Dendritic cell treated with granulocyte-macrophage colony-stimulating factor and Interleukin-4, amounts not matched to agents 40 ng/mL and 50 ng/mL, for 4 days (primary cell): ENCODE measurements at regions of chr10 and their contacts with region 1.

Region 1: DNA sequence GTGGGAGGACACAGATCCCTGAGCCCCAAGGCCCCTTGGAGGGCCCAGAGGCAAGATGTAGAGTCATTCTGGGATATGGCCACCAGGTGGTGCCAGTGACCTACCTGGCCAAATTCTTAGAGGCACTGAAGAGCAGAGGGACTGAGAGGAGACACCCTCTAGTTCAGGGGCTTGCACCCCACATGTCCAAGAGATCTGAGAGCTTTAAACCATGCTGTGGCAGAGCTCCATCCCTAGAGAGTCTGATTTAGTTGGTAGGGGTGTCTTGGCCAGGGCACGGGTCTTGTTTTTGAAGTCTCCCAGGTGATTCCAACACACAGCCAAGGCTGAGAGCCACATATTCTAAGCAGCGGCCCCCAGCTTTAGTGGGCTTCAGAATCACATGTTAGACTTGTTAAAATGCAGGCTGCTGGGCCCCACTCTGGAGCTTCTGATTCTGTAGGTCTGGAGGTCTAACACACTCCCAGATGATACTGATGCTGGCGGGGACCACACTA is 52.5 kb downstream of the PRF1 start:
- H3K4me3 Mint-ChIP-seq: no peak overlapping the region
- H3K27ac Mint-ChIP-seq: no peak overlapping the region
- H3K4me1 Mint-ChIP-seq: peaks cover 1% of the 10 kb centered on the region
- H3K27me3 Mint-ChIP-seq: no peaks in the 10 kb centered on the region

Region 2: DNA sequence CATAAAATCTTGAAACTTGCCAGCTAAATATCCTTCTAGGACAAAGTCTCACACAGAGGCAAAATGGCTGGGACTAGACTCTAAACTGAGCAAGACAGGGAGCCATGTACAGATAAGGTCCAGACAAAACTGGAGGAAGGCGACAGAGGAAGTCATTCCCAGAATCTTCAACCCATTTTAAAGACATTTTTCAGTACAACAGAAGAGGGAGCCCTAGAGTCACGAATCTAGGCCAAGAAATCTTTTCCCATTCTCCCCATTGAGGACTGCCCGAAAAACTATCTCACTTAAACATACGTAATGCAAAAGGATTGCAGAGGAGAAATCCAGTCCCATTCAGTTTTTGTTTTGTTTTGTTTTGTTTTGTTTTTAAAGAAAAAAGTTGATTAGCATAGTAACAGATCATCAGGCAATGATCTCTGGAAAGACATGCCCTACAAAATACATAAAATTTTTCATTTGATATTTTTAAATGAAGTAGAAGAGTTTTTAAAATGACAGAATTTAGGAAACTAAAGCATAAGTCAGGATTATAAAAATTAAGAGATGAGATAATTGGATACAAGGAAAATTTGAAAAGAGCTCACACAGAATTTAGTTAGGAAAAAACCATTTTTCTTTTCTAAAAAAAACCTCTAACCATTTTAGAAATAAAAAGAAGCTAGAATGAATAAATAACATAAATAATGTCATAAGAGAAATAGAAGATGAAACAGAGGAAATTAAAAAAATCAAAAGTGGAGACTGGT is 69.4 kb after region 1 on chr10:
- intact Hi-C with region 1: loop called (anchors 10 kb)
- H3K4me3 Mint-ChIP-seq: no peak overlapping the region
- H3K27ac Mint-ChIP-seq: no peak overlapping the region
- H3K4me1 Mint-ChIP-seq: peaks cover 20% of the 10 kb centered on the region
- H3K27me3 Mint-ChIP-seq: peaks cover 24% of the 10 kb centered on the region

Region 3: DNA sequence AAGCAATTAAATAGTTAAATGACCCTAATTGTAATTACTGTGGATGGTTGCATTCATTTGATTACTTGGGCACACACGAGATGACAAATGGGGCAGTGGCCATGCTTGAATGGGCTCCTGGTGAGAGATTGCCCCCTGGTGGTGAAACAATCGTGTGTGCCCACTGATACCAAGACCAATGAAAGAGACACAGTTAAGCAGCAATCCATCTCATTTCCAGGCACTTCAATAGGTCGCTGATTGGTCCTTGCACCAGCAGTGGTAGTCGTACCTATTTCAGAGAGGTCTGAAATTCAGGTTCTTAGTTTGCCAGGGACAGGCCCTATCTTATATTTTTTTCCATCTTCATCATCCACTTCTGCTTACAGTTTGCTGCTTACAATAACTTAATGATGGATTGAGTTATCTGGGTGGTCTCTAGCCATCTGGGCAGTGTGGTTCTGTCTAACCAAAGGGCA is 330.1 kb after region 1 on chr10:
- intact Hi-C with region 1: loop called (anchors 5 kb)
- H3K4me3 Mint-ChIP-seq: no peak overlapping the region
- H3K27ac Mint-ChIP-seq: peak overlapping the region; percentile 78
- H3K4me1 Mint-ChIP-seq: peaks cover 20% of the 10 kb centered on the region
- H3K27me3 Mint-ChIP-seq: no peaks in the 10 kb centered on the region

Region 4: GRCh38 chr10:71547876-71548846 is 998.2 kb after region 1 on chr10:
- intact Hi-C with region 1: no loop called
- H3K4me3 Mint-ChIP-seq: no peak overlapping the region
- H3K27ac Mint-ChIP-seq: no peak overlapping the region
- H3K4me1 Mint-ChIP-seq: peaks cover 11% of the 10 kb centered on the region
- H3K27me3 Mint-ChIP-seq: peaks cover 10% of the 10 kb centered on the region